Left cardiac atrium (tissue), 4 donors: ENCODE measurements at regions of chr22 and their contacts with region 1.

Region 1: DNA sequence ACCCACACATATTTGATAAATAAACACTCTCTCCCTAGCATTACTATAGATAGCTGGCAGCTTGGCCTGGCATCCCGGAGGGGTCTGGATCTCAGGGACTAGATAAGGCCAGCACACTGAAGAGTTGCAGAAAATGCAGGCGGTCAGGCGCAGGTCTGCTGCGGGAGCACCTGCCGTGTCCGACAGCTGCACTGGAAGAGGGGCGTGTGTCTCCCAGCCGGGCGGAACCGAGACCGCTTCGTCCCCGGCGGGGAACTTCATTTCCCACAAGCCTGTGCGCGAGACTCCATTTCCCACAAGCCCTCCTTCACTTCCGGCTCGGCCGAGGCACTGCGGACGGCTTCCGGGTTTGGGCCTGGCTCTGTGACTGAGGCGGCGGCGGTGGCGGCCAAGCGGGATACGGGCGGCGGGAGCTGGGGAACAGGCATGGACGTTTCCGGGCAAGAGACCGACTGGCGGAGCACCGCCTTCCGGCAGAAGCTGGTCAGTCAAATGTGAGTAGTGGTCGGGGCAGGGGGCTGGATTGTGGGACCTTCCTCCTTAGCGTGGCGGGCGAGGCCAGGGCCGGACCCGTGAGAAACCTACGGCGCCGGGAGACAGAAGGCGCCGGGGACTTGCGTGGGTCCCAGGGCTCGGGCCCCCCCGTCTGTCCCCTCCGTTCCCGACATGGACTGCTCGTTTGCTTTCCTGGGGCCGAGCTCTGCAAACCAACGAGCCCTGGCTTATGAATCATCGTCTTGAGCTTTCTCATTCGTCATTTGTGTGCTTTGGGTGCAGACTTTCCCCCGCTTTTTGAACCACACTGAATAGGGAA is at the start of gene MED15:
- DNase-seq: peak; percentile 94
- ATAC-seq: peak; percentile 94 to 96
- total RNA-seq, gene MED15: 42.7 to 47.9 TPM

Region 2: GRCh38 chr22:20550821-20551744 is 43.6 kb after region 1 on chr22:
- intact Hi-C with region 1: loop called in 1 of 2 experiments (anchors 10 kb)
- DNase-seq: peak; percentile 57
- ATAC-seq: peak; percentile 27 to 53

Region 3: DNA sequence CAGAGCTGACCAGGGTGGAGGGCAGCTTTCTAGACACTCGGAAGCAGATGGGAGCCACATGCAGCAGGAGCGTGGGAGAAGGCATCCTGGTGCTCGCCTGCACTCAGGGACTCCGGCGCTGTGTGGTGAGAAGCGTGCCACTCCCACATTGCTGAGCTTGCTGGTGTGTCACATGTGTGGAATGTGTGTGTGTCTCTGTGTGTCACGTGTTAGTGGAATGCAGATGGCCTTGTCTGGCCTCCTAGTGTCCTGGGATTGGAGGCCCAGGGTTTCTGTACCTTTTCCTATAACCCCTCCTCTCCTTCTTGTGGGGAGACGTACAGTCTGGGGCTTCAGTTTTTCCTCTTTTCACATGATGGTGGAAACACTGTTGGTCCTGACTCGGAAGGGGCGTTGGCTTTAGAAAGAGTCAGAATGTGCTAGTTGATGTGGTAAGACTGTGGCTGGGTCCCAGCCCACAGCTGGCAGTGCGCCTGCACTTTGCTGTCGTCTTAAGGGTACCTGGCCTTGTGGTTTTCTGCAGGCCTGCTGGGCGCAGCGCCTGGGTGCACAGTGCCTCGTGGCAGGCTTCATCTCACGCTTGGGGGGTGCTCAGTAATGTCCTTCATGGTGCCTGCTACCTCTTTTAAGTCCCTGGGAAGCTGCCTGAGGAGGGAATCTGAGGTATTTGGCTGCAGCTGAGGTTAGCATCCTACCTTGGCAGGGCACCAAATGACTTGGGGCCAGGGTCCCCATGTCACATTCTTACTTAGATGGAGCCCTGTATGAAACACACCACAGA is 61.7 kb after region 1 on chr22:
- intact Hi-C with region 1: loop called (anchors 5 to 10 kb)
- DNase-seq: peak; percentile 63
- ATAC-seq: peak; percentile 74 to 83